MCF 10A (cell line): ENCODE measurements at regions of chr1 and their contacts with region 1.

Region 1: DNA sequence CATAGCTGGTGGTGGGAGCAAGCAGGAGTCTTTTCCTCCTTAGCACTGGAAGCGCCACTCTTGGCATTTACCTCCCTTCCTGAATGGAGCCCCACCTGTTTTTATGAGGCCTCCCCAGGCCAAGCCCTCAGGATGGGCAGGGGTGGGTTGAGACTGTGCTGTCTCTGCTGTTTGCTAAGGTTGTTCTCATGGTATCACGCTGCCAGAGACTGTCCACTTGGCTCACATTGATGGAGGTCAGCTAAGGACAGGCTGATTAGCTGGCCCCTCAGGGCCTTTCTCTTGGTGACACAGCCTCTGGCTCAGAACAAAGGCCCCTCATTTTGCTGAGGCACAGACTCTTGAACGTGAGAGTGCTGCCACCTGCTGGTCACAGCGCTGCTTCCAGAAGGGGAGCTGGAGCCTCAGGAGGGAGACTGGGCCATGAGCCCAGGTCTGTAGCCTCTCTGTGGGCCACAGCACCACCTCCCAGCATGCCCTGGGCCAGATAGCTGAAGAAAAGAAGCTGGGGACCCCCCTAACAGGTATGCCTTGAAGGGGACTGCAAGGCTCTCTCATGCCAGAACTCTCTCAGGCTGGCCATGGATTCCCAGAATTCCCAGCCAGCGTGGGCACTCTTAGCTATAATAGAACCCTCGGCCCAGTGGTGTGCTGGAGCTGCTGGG is 85.6 kb downstream of the CD58 start:
- DNase-seq: peak; percentile 82
- H3K4me3 Mint-ChIP-seq: no peak overlapping the region
- H3K27ac Mint-ChIP-seq: no peak overlapping the region
- H3K4me1 Mint-ChIP-seq: peaks cover 28% of the 10 kb centered on the region
- H3K27me3 Mint-ChIP-seq: no peaks in the 10 kb centered on the region
- CTCF ChIP-seq: peak; percentile 90

Region 2: GRCh38 chr1:116133696-116134650 is 351.2 kb before region 1 on chr1:
- CTCF ChIA-PET with region 1: interaction called, 323 read pairs
- POLR2A ChIA-PET with region 1: interaction called, 33 read pairs
- intact Hi-C with region 1: loop called (anchors 1 kb)
- DNase-seq: no peak
- H3K4me3 Mint-ChIP-seq: no peak overlapping the region
- H3K27ac Mint-ChIP-seq: no peak overlapping the region
- H3K4me1 Mint-ChIP-seq: no peaks in the 10 kb centered on the region
- H3K27me3 Mint-ChIP-seq: no peaks in the 10 kb centered on the region
- CTCF ChIP-seq: no peak

Region 3: DNA sequence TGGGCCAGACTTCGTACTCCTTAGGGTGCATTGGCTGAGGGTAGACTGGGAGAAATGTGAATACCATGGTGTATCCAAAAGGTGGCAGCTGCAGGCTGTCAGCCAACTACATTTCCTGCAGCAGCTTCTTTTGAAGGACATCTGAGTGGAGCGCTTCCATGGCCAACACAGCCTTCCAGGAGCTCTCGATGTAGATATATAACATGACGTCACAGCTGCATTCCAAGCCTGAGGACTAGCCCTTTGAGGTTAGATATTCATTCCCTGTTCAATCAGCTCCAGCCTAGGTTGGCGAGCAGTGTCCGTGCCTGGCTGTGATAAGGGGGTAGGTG is 266.2 kb before region 1 on chr1:
- CTCF ChIA-PET with region 1: interaction called, 7 read pairs
- POLR2A ChIA-PET with region 1: no interaction called
- intact Hi-C with region 1: loop called (anchors 1 kb)
- DNase-seq: peak; percentile 13
- H3K4me3 Mint-ChIP-seq: no peak overlapping the region
- H3K27ac Mint-ChIP-seq: no peak overlapping the region
- H3K4me1 Mint-ChIP-seq: no peaks in the 10 kb centered on the region
- H3K27me3 Mint-ChIP-seq: no peaks in the 10 kb centered on the region
- CTCF ChIP-seq: no peak

Region 4: GRCh38 chr1:116360429-116361173 is 124.6 kb before region 1 on chr1:
- CTCF ChIA-PET with region 1: interaction called, 7 read pairs
- POLR2A ChIA-PET with region 1: no interaction called
- intact Hi-C with region 1: loop called (anchors 2 kb)
- DNase-seq: peak; percentile 48
- H3K4me3 Mint-ChIP-seq: no peak overlapping the region
- H3K27ac Mint-ChIP-seq: no peak overlapping the region
- H3K4me1 Mint-ChIP-seq: peaks cover 24% of the 10 kb centered on the region
- H3K27me3 Mint-ChIP-seq: no peaks in the 10 kb centered on the region
- CTCF ChIP-seq: peak; percentile 21

Region 5: GRCh38 chr1:116418091-116418830 is 66.9 kb before region 1 on chr1:
- CTCF ChIA-PET with region 1: interaction called, 20 read pairs
- POLR2A ChIA-PET with region 1: no interaction called
- intact Hi-C with region 1: no loop called
- DNase-seq: peak; percentile 70
- H3K4me3 Mint-ChIP-seq: peak overlapping the region; percentile 85
- H3K27ac Mint-ChIP-seq: peak overlapping the region; percentile 50
- H3K4me1 Mint-ChIP-seq: peaks cover 6% of the 10 kb centered on the region
- H3K27me3 Mint-ChIP-seq: no peaks in the 10 kb centered on the region
- CTCF ChIP-seq: no peak

Region 6: GRCh38 chr1:116498789-116499628 is 13.8 kb after region 1 on chr1:
- CTCF ChIA-PET with region 1: interaction called, 110 read pairs
- POLR2A ChIA-PET with region 1: interaction called, 3 read pairs
- intact Hi-C with region 1: no loop called
- DNase-seq: peak; percentile 73
- H3K4me3 Mint-ChIP-seq: no peak overlapping the region
- H3K27ac Mint-ChIP-seq: no peak overlapping the region
- H3K4me1 Mint-ChIP-seq: peaks cover 17% of the 10 kb centered on the region
- H3K27me3 Mint-ChIP-seq: no peaks in the 10 kb centered on the region
- CTCF ChIP-seq: peak; percentile 86